ENCODE measurements at regions of chr9 and their contacts with region 1.

Region 1: GRCh38 chr9:116860509-116861120 is 173.5 kb downstream of the TRIM32 start:
- DNase-seq: peak; percentile 67 to 89 (median 78)
- H3K4me3 ChIP-seq: no peak overlapping the region
- H3K27ac ChIP-seq: no peak overlapping the region
- H3K4me1 ChIP-seq: no peaks in the 10 kb centered on the region
- H3K27me3 ChIP-seq: no peaks in the 10 kb centered on the region
- CTCF ChIP-seq: peak; percentile 69 to 83 (median 74)
- POLR2A ChIP-seq: no peak

Region 2: DNA sequence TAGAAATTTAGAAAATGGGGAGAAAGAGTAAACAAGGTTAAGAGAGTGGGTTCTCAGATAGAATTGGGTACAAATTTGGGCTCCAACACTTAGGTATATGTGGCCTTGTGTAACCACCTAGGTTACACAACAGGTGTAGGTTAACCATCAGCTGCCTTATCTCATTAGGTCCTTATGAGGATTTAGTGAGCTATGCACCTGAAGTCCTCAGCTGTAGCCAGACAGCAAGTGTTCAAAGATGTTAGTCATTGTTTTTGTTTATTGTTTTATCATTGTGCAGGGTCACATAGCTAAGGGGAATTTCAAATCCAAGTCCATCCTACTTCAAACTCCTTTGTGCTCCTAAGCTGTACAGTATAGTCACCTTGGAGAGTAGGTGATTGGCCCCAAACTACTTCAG is 174.5 kb before region 1 on chr9:
- intact Hi-C with region 1: no loop called
- DNase-seq: no peak
- H3K4me3 ChIP-seq: peak overlapping the region in 1 of 4 donors; percentile 49
- H3K27ac ChIP-seq: no peak overlapping the region
- H3K4me1 ChIP-seq: peaks cover 19 to 43% of the 10 kb centered on the region in 2 donors
- H3K27me3 ChIP-seq: no peaks in the 10 kb centered on the region
- CTCF ChIP-seq: no peak
- POLR2A ChIP-seq: no peak

Region 3: DNA sequence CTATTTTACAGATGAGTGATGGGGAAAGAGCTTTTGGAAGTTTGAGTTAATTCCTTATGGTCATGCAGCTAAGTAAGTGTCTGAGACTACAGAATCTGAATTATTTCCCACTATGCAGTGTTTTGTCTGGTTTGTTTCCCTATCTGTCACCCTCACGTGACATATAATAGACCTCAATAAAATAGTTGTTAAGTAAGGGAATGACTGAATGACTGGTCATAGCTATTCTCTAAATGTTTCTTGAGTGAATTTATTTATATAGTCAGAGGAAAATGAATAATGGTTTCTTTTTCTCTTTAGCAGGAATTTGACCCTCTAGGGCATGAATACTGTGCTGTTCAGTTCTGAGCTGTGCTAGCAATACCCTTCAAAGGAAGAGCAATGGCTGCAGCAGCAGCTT is 163.3 kb before region 1 on chr9:
- intact Hi-C with region 1: no loop called
- DNase-seq: no peak
- H3K4me3 ChIP-seq: no peak overlapping the region
- H3K27ac ChIP-seq: no peak overlapping the region
- H3K4me1 ChIP-seq: peaks cover 0 to 42% of the 10 kb centered on the region in 2 donors
- H3K27me3 ChIP-seq: no peaks in the 10 kb centered on the region
- CTCF ChIP-seq: no peak
- POLR2A ChIP-seq: no peak

Region 4: DNA sequence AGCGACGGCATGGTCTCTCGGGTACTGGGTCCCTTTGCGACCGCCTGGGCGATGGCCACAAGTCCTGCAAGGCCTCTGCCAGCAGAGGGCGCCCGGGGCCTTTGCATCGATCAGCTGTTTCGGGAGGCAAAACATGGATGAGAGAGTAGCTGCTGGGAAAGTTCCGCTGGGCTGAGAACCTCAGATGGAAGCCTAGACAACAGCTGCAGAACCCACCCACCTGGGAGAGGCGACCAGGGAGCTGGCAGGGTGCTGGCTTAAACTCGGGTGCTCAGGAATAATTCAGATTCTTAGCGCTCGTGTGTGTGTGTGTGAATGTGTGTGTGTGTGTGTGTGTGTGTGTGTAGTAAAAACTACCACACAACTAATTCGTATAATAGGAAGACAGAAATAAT is 123.5 kb before region 1 on chr9:
- intact Hi-C with region 1: loop called (anchors 2 to 5 kb)
- DNase-seq: peak; percentile 82 to 93 (median 85)
- H3K4me3 ChIP-seq: no peak overlapping the region
- H3K27ac ChIP-seq: no peak overlapping the region
- H3K4me1 ChIP-seq: peaks cover 0 to 5% of the 10 kb centered on the region in 2 donors
- H3K27me3 ChIP-seq: no peaks in the 10 kb centered on the region
- CTCF ChIP-seq: peak; percentile 75 to 91 (median 90)
- POLR2A ChIP-seq: no peak

Measured in adrenal gland (tissue), 19 donors.